Astrocyte of the cerebellum (primary cell): ENCODE measurements at regions of chr15 and their contacts with region 1.

Region 1: DNA sequence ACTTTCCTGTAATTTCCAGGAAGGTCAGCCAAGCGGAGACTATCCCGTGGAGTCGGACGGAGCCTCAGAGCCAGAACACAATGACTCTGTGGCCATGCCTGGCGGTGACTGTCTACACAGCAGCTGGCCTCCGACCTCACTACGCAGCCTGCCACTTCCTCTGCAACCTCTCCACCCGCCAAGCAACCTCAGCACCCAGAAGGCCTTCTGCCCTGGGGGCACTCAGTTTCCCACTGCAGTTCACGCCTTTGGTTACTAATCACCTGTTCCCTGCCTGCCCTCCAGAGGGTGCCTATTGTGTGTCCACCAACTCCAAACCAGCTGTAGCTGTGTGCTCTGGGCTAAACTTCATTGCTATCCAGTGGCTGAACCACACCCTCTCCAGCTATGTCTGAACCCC is 44.0 kb downstream of the TM2D3 start:
- DNase-seq: no peak
- H3K4me3 ChIP-seq: no peak overlapping the region
- CTCF ChIP-seq: no peak

Region 2: GRCh38 chr15:101510212-101511197 is 97.7 kb before region 1 on chr15:
- in situ Hi-C with region 1: loop called (anchors 5 kb)
- DNase-seq: no peak
- H3K4me3 ChIP-seq: no peak overlapping the region
- CTCF ChIP-seq: no peak

Region 3: GRCh38 chr15:101521591-101521990 is 86.6 kb before region 1 on chr15:
- in situ Hi-C with region 1: no loop called
- DNase-seq: no peak
- H3K4me3 ChIP-seq: no peak overlapping the region
- CTCF ChIP-seq: no peak

Region 4: DNA sequence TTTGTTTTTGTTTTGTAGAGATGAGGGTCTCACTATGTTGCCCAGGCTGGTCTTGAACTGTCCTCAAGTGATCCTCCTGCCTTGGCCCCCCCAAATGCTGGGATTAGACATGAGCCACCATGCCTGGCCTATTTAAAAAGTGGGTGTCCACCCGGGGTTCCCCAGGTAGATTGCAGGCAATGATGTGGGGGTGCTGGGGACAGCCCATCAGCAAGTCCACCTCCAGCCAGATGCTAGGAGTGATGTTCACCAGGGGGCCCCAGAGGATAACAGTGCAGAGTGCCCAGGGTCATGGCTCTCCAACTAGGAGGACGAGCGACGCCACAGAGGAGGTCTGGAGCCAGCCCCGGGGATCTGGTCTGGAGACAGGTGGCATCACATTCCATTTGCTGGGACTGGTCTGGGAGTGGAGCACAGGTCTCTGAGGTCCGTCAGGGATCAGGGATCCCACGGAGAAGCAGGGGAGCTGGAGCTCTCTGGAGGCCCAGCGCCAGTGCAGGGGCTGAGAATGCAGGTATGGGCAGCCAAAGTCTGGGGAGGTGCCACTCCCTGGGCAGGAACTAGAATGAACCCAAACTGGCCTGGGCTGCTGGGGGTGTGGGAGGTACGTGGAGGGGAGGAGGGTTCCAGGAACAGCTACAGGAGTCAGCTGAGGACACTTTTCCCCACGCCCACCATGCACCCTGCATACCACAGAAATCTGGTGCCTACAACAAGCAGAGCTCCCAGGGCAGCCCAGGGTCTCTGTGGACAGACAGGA is 67.5 kb before region 1 on chr15:
- in situ Hi-C with region 1: no loop called
- DNase-seq: no peak
- H3K4me3 ChIP-seq: no peak overlapping the region
- CTCF ChIP-seq: no peak

Region 5: GRCh38 chr15:101559952-101560351 is 48.2 kb before region 1 on chr15:
- in situ Hi-C with region 1: loop called (anchors 5 kb)
- DNase-seq: no peak
- H3K4me3 ChIP-seq: no peak overlapping the region
- CTCF ChIP-seq: no peak